ENCODE measurements at regions of chr3 and their contacts with region 1.

Region 1: DNA sequence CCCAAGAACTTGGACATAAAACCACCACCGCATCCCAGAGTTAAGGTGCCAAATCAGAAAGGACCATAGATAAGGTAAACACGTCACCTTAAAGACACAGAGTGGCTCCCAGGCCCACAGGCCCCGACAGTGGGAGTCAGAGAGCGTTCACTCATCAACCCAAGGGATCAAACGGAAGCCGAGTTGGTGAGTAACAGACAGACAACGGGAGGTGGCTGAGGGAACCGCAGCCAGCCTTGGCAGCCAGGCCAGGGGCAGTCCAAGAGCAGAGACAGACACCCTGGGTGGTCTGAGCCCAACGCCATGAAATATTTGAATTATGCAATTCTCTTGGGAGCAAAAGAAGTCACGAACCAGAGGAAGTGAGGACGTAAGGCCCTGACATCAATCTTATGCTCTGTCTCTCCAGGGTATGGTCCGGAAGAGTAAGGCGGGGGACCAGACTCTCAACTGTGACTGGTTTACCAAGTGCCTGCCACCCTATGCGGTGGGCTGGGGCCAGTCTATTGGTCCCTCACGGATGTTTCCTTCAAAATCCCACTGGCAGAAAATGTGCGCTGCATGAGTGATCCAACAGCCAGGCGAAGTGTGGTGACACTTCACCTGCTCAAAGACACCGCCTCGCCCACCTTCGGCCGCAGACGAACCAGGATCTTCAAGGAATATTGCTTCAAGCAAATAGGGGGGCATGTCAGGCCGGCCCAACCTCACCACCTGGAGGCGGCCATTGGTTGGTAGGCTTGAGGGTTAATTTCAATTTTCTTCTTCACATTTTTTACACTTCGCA is 34.3 kb downstream of the TMEM44 start:
- DNase-seq: peak; percentile 90

Region 2: GRCh38 chr3:194465920-194466570 is 132.9 kb before region 1 on chr3:
- intact Hi-C with region 1: loop called (anchors 1 to 5 kb)
- DNase-seq: no peak

Region 3: DNA sequence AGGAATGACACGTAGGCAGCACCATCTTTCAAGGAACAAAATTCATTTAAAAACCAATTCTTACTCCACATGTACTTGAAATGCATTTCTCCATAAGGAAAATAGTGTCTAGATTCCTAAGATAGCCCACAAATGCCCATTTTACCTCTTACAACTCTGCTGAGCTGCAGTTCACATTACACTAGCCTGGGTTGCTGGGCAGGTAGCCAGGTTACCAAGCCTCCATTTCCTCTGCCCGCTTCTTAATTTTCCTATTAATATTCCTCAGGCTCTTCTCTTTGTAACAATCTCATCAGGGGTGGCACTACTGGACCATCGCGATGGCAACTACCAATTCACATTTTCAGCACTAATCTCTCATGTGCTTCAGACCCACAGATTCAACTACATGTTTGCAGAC is 123.0 kb before region 1 on chr3:
- intact Hi-C with region 1: loop called in 1 of 2 experiments (anchors 1 kb)
- DNase-seq: no peak

Region 4: GRCh38 chr3:194486540-194487288 is 112.2 kb before region 1 on chr3 and contains the start of gene ATP13A3:
- intact Hi-C with region 1: no loop called
- DNase-seq: peak; percentile 97
- total RNA-seq, gene ATP13A3: 86.3 to 152 TPM

Measured in posterior vena cava (tissue), 2 donors.